ENCODE measurements at regions of chr2 and their contacts with region 1.

Region 1: GRCh38 chr2:73907840-73908452 is 15.1 kb downstream of the ACTG2 start:
- DNase-seq: peak; percentile 28
- H3K4me3 Mint-ChIP-seq: no peak overlapping the region
- H3K27ac Mint-ChIP-seq: no peak overlapping the region
- H3K4me1 Mint-ChIP-seq: no peaks in the 10 kb centered on the region
- H3K27me3 Mint-ChIP-seq: peaks cover 4% of the 10 kb centered on the region
- CTCF ChIP-seq: no peak

Region 2: GRCh38 chr2:73716543-73717250 is 191.2 kb before region 1 on chr2:
- CTCF ChIA-PET with region 1: no interaction called
- intact Hi-C with region 1: no loop called
- DNase-seq: no peak
- H3K4me3 Mint-ChIP-seq: no peak overlapping the region
- H3K27ac Mint-ChIP-seq: no peak overlapping the region
- H3K4me1 Mint-ChIP-seq: no peaks in the 10 kb centered on the region
- H3K27me3 Mint-ChIP-seq: peaks cover 25% of the 10 kb centered on the region
- CTCF ChIP-seq: no peak

Region 3: DNA sequence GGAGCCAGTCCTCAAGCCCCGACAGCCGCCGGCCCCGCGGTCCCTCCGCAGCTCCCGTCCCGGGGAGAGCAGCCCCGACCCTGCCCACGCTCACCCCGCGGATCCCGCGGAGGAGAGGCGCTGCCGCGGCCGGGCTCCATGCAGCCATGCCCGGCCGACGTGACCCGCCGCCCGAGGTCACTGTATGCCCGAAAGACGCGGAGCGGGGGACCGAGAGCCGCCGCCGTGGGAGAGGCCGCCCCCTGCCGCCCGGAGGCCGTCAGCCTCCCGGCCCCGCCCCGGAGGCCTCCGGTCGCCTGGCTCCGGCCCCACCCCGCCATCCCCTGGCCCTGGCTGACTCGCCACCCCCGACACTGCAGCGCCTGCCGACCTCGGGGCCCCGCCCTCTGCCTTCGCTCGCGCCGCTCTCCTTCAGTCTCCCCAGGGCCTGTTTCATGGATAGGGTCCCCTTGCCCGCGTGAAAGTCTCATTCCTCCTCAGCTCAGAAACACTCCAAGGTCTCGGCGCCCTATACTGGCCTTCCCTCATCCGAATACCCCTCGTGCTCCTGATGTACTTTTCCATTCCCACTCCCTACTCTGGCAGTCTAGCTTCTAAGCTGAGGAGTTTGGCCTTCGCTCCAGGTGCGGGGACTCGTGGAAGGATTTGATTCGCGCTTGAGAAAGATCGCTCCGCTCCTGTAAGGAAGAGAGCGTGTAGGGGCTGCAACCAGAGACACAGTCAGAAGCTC is 239.9 kb after region 1 on chr2 and contains the start of gene BOLA3:
- CTCF ChIA-PET with region 1: interaction called, 11 read pairs
- intact Hi-C with region 1: no loop called
- DNase-seq: peak; percentile 92
- H3K4me3 Mint-ChIP-seq: no peak within 1 kb of the TSS
- H3K27ac Mint-ChIP-seq: no peak within 1 kb of the TSS
- H3K4me1 Mint-ChIP-seq: no peaks in the 10 kb centered on the region
- H3K27me3 Mint-ChIP-seq: no peaks in the 10 kb centered on the region
- CTCF ChIP-seq: peak; percentile 61
- total RNA-seq, gene BOLA3: 45.8 and 54.9 TPM in 2 replicates

Measured in Calu3 (cell line).